ENCODE measurements at regions of chr6 and their contacts with region 1.

Region 1: DNA sequence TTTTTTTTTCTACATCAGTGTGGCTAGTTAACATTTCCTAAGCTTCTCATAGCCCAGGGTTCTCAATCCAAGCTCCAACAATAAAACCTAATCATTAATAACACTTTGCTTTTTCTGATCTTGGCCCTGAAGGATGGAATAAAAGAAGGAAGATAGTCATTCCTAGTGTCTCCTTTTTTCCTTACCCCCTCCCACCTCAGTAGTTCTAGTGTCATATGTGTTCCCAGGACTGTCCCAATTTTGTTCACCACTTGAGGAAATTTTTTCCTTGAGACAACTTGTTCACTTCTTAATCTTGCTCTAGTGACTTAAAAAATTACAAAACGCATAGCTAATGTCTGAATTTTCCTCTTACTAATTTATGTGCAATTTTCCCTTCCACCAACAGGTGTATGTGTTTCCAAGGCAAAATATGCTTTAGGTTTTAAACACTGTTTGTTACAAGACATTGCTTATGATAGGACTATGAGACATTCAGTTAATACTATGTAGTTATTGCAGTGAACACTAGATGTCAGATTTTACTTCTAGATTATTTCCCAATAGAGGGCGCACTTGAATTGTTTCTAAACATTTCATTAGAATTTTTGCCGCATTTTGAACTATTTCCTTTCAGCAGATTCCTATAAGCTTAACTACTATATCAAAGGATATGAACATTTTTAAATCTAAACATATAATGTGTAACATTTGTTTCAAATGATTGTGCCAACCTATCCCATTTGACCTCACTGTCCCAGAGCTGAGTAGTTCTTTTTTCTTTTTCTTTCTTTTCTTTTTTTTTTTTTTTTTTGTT is 18.5 kb upstream of the C6orf141 start:
- DNase-seq: peak; percentile 32
- H3K4me3 ChIP-seq: peak overlapping the region in 1 of 2 experiments; percentile 21; a peak in 2 of 4 replicates
- H3K27ac ChIP-seq: no peak overlapping the region
- H3K4me1 ChIP-seq: no peaks in the 10 kb centered on the region
- H3K27me3 ChIP-seq: peaks cover 7% of the 10 kb centered on the region; the same call in 1 of the 2 replicates
- CTCF ChIP-seq: peak; percentile 96
- EP300 ChIP-seq: no peak
- RAD21 ChIP-seq: peak; percentile 68

Region 2: DNA sequence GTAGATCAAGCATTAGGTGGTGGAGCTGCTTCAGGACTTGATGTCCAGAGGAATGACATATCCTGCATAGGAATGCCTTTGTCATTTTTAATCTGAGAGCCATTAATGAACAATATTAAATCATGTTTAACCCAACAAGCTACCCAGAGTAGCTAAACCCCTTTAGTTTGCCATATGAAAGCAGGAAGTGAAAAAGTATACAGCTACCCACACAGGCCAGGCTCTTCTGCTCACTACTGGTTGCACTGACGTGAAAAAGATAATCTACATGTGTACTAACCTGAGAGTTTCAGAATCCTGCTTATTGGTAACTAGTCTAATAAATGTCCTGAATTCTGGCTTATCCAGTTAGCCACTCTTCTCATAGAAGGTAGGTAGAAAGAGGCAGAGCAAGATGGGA is 12.3 kb before region 1 on chr6:
- CTCF ChIA-PET with region 1: interaction called, 15 read pairs
- POLR2A ChIA-PET with region 1: no interaction called
- DNase-seq: no peak
- H3K4me3 ChIP-seq: no peak overlapping the region
- H3K27ac ChIP-seq: no peak overlapping the region
- H3K4me1 ChIP-seq: no peaks in the 10 kb centered on the region
- H3K27me3 ChIP-seq: no peaks in the 10 kb centered on the region; the same call in 1 of the 2 replicates
- CTCF ChIP-seq: no peak
- EP300 ChIP-seq: no peak
- RAD21 ChIP-seq: no peak

Region 3: GRCh38 chr6:49543087-49543858 is 11.3 kb after region 1 on chr6:
- CTCF ChIA-PET with region 1: interaction called, 24 read pairs
- POLR2A ChIA-PET with region 1: no interaction called
- DNase-seq: no peak
- H3K4me3 ChIP-seq: no peak overlapping the region
- H3K27ac ChIP-seq: no peak overlapping the region
- H3K4me1 ChIP-seq: no peaks in the 10 kb centered on the region; a peak in 1 of 4 replicates
- H3K27me3 ChIP-seq: no peaks in the 10 kb centered on the region; the same call in 1 of the 2 replicates
- CTCF ChIP-seq: no peak
- EP300 ChIP-seq: no peak
- RAD21 ChIP-seq: no peak

Region 4: DNA sequence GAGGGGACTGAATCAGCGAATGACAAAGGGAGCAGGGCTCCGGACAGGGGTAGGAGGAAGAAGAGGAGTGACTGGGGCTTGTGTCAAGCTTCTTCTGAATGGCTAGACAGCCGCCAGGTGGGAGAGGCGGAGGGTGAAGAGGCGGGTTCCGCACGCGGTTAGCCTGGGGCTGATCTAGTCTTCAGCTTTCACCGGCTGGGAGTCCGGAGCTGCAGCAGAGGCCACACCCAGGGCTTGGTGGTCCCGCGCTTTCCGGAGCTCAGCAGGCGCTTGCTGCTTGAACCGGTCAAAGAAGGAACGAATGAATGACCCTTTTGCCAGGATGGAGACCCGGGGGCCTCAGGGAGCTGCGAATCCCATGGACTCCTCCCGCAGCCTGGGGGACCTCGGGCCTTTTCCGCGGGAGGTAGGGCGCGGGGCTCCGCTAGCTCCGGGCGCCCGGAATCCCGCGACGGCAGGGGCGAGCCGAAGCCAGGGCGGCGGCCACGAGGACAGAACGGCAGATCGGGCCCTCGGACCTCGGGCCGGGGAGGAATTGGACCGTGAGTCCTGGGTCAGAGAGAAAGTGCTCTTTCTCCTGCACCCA is 18.6 kb after region 1 on chr6 and contains the start of gene C6orf141:
- CTCF ChIA-PET with region 1: interaction called, 24 read pairs
- POLR2A ChIA-PET with region 1: no interaction called
- DNase-seq: peak; percentile 11
- H3K4me3 ChIP-seq: no peak within 1 kb of the TSS
- H3K27ac ChIP-seq: no peak within 1 kb of the TSS
- H3K4me1 ChIP-seq: no peaks in the 10 kb centered on the region
- H3K27me3 ChIP-seq: peaks cover 27% of the 10 kb centered on the region
- CTCF ChIP-seq: no peak
- EP300 ChIP-seq: no peak
- RAD21 ChIP-seq: no peak
- polyA plus RNA-seq, gene C6orf141: not detected in 2 replicates

Region 5: DNA sequence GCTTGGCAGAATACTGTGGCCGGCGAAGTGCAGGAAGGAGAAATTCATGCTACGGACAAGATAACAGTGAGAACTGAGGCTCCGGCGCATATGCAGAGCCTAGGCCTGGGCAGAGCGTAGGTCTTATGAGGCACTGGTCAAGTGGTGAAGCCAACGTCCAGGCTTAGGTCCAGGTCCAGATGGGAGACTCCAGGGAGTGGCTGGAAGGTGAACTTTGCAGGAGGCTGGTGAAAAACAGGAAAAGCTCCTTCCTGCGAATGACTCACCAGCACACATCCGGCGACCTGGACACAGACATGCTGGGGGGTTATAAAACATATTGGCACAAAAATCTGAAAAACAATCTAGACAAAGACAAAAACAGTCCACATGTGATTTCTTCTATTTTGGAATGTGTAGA is 33.9 kb after region 1 on chr6:
- CTCF ChIA-PET with region 1: interaction called, 16 read pairs
- POLR2A ChIA-PET with region 1: no interaction called
- DNase-seq: no peak
- H3K4me3 ChIP-seq: no peak overlapping the region
- H3K27ac ChIP-seq: no peak overlapping the region
- H3K4me1 ChIP-seq: no peaks in the 10 kb centered on the region
- H3K27me3 ChIP-seq: no peaks in the 10 kb centered on the region; the same call in 1 of the 2 replicates
- CTCF ChIP-seq: no peak
- EP300 ChIP-seq: no peak
- RAD21 ChIP-seq: no peak

Region 6: GRCh38 chr6:49606696-49607390 is 74.9 kb after region 1 on chr6:
- CTCF ChIA-PET with region 1: interaction called, 27 read pairs
- POLR2A ChIA-PET with region 1: no interaction called
- DNase-seq: peak; percentile 52
- H3K4me3 ChIP-seq: peak overlapping the region in 1 of 2 experiments; percentile 21; a peak in 1 of 4 replicates
- H3K27ac ChIP-seq: no peak overlapping the region
- H3K4me1 ChIP-seq: no peaks in the 10 kb centered on the region
- H3K27me3 ChIP-seq: peaks cover 11% of the 10 kb centered on the region
- CTCF ChIP-seq: peak; percentile 86
- EP300 ChIP-seq: no peak
- RAD21 ChIP-seq: peak; percentile 65

Measured in SK-N-SH (cell line).